ENCODE measurements at regions of chr2 and their contacts with region 1.

Region 1: DNA sequence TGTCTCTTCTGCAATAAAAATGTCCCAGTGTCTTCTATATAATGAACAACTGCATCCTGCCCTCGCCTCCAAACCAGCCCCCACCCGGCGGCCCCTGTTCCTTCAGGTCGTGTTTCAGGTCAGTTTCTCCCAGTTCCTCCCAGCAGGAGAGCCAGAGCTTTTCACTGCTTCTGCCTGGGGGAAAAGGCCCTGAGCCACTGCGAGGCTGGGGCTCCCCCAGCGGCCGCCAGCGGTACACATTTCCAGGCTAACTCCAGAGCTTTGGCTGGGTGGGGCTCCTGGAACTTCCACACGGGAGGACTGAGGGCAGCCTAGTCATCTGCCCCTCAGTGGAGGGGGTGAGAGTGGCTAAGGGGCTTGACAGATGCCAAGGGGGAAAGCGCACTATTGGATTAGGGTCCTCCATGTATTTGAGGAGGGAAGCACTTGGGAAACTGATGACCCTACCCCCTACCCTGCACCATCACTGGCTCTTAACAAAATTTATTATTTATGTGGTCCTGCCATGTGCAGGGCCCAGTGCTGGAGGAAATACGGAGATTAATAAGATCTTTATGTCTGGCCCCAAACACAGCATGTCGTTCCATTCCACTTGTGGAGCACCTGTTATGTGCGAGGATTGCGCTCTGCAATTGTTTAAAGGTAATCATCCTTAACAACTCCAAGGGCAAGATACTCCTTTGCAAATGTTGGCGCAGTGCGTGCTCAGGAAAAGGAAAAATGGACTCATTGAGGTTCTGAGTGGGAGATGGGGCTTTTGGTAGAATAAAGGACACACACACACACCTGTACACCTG is 17.3 kb upstream of the CYS1 start:
- DNase-seq: peak; percentile 61
- ATAC-seq: peak; percentile 98
- H3K4me3 ChIP-seq: no peak overlapping the region
- H3K27ac ChIP-seq: no peak overlapping the region
- H3K4me1 ChIP-seq: no peaks in the 10 kb centered on the region
- H3K27me3 ChIP-seq: peaks cover 0 to 29% of the 10 kb centered on the region in 2 experiments; a peak in 4 of 5 replicates
- CTCF ChIP-seq: peak; percentile 93
- EP300 ChIP-seq: no peak
- POLR2A ChIP-seq: no peak
- RAD21 ChIP-seq: peak; percentile 90

Region 2: DNA sequence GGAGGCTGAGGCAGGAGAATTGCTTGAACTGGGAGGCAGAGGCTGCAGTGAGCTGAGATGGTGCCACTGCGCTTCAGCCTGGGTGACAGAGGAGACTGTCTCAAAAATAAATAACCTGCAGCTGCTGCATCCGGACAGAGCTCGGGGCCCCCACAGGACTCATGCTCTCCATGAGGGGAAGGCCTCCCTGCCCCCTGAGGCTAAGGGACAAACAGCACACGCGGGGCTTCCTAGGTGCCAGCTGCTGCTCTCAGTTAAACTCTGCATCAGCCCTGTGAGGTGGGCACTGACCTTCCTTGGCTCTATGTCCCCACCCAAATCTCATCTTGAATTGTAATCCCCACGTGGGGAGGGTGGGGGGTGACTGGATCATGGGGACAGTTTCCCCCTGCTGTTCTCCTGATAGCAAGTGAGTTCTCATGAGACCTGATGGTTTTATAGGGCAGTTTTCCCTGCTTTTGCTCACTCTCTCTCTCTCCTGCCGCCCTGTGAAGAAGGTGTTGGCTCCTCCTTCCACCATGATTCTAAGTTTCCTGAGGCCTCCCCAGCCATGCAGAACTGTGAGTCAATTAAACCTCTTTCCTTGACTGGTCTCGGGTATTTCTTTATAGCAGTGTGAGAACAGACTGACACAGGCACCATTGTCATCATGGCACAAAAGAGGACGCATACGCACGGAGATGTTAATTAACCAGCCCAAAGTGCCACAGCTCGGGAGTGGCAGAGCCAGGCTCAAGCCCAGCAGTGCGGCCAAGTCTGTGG is 304.2 kb before region 1 on chr2:
- CTCF ChIA-PET with region 1: no interaction called
- POLR2A ChIA-PET with region 1: no interaction called
- in situ Hi-C with region 1: no loop called
- intact Hi-C with region 1: no loop called
- DNase-seq: no peak
- ATAC-seq: no peak
- H3K4me3 ChIP-seq: no peak overlapping the region
- H3K27ac ChIP-seq: no peak overlapping the region
- H3K4me1 ChIP-seq: peaks cover 35% of the 10 kb centered on the region
- H3K27me3 ChIP-seq: peaks cover 2 to 28% of the 10 kb centered on the region in 2 experiments; a peak in 3 of 5 replicates
- CTCF ChIP-seq: no peak
- EP300 ChIP-seq: no peak
- POLR2A ChIP-seq: no peak
- RAD21 ChIP-seq: no peak

Region 3: GRCh38 chr2:10072656-10073480 is 24.7 kb before region 1 on chr2:
- CTCF ChIA-PET with region 1: interaction called, 32 read pairs
- POLR2A ChIA-PET with region 1: interaction called, 15 read pairs
- in situ Hi-C with region 1: no loop called
- intact Hi-C with region 1: loop called (anchors 1 kb)
- DNase-seq: peak; percentile 86
- ATAC-seq: peak; percentile 95
- H3K4me3 ChIP-seq: no peak overlapping the region; a peak in 1 of 6 replicates
- H3K27ac ChIP-seq: no peak overlapping the region
- H3K4me1 ChIP-seq: peaks cover 12% of the 10 kb centered on the region
- H3K27me3 ChIP-seq: peaks cover 8 to 57% of the 10 kb centered on the region in 2 experiments; a peak in 4 of 5 replicates
- CTCF ChIP-seq: peak; percentile 97
- EP300 ChIP-seq: no peak
- POLR2A ChIP-seq: no peak
- RAD21 ChIP-seq: peak; percentile 86